G401 (cell line): ENCODE measurements at regions of chr20 and their contacts with region 1.

Region 1: GRCh38 chr20:50788078-50788991 is 6.5 kb upstream of the BCAS4 start:
- DNase-seq: peak; percentile 40

Region 2: DNA sequence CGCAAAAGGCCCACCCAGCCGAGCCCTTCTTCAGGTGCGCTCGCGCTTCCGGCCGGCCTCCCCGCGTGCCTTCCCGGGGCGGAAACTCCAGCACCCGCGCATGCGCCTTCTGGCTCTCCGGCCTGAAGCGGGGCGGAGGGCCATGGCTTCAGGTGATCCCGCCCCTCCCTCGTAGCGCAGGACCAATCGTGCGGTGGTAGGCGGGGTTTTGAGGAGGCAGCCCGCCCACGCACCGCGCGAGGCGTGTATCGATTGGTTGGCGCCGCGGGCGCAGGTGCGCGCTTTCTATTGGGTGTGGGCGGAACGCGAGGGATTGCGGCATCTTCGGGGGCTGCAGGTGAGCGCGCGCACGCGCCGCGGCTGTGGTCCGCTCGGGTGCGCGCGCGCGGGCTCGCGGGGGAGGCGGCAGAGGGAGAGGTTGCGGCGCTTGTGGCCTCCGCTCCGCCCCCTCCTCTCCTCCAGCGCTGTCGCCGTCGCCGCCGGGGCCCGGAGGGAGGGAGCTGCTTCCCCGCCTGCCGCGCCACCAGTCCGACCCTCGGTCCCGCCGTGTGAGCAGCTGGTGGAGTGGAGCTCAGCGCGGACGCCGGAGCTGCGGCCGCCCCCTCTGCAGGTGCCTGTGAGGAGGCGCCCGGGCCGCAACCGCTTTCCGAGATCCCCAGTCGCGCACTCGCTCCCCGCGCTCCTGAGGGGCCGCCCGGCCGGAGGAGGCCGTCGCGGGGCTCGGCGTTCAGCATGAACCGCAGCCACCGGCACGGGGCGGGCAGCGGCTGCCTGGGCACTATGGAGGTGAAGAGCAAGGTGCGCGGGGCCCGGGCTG is 57.1 kb before region 1 on chr20 and contains the start of gene PARD6B:
- in situ Hi-C with region 1: loop called (anchors 5 kb)
- DNase-seq: peak; percentile 99
- total RNA-seq, gene PARD6B: 30.0 and 43.3 TPM in 2 replicates